Activated CD4-positive, alpha-beta T cell treated with anti-CD3 and anti-CD28 coated beads for 36 hours (primary cell): ENCODE measurements at regions of chr17 and their contacts with region 1.

Region 1: DNA sequence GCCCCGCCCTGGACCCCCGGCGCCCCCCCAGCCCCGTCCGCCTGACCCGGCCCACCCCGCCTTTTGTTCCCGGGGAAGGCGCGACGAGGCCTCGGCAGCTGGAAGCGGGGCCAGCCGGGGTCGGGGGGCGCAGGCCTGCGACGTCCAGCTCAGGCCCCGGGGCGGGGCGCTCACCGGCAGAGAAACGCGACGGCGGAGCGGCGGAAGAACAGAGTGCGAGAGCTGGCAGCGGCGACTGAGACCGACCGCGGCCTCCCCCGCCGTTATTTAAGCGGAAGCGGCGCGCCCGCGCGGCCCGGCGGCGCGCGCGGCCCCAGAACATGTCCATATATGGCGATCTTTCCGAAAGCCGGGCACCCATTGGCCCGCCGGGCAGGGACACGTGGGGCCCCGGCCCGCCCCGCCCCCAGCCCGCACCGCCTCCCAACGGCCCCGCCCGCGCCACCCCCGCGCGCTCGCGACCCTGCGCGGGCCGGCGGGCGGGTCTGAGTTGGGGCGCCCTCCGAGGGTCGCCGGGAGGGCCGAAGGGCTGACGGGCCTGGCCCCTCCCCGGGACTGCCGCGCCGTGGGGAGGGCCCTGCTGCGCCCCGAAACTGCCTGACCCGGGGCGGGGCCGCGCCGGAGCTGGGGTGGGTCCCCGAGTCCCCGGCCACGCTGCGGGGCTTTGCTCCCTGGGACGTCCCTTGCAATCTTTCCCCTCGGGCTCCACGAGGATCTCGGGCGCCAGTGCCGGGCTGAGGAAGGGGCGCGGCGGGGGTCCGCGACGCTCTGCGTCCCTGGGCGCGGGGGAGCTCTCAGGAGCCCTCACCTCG is at the start of gene ACTG1:
- DNase-seq: peak; percentile 95
- ATAC-seq: peak; percentile 61
- H3K4me3 Mint-ChIP-seq: peak within 1 kb of the TSS; percentile 97
- H3K27ac Mint-ChIP-seq: peak within 1 kb of the TSS; percentile 89
- H3K4me1 Mint-ChIP-seq: peaks cover 21% of the 10 kb centered on the region
- H3K27me3 Mint-ChIP-seq: no peaks in the 10 kb centered on the region
- total RNA-seq, gene ACTG1: 4,119 to 5,987 TPM

Region 2: GRCh38 chr17:81346090-81346907 is 166.5 kb before region 1 on chr17:
- CTCF ChIA-PET with region 1: no interaction called
- POLR2A ChIA-PET with region 1: no interaction called
- intact Hi-C with region 1: loop called in 1 of 2 experiments (anchors 1 kb)
- DNase-seq: peak; percentile 98
- ATAC-seq: peak; percentile 93
- H3K4me3 Mint-ChIP-seq: peak overlapping the region; percentile 26
- H3K27ac Mint-ChIP-seq: no peak overlapping the region
- H3K4me1 Mint-ChIP-seq: peaks cover 19% of the 10 kb centered on the region
- H3K27me3 Mint-ChIP-seq: peaks cover 25% of the 10 kb centered on the region

Region 3: GRCh38 chr17:81412490-81413093 is 100.2 kb before region 1 on chr17:
- CTCF ChIA-PET with region 1: no interaction called
- POLR2A ChIA-PET with region 1: no interaction called
- intact Hi-C with region 1: no loop called
- DNase-seq: peak; percentile 67
- ATAC-seq: peak; percentile 75
- H3K4me3 Mint-ChIP-seq: no peak overlapping the region
- H3K27ac Mint-ChIP-seq: no peak overlapping the region
- H3K4me1 Mint-ChIP-seq: peaks cover 7% of the 10 kb centered on the region
- H3K27me3 Mint-ChIP-seq: peaks cover 12% of the 10 kb centered on the region

Region 4: GRCh38 chr17:81484195-81484979 is 28.4 kb before region 1 on chr17:
- CTCF ChIA-PET with region 1: interaction called, 5 read pairs
- POLR2A ChIA-PET with region 1: interaction called, 11 read pairs
- intact Hi-C with region 1: loop called (anchors 1 to 2 kb)
- DNase-seq: peak; percentile 94
- ATAC-seq: peak; percentile 68
- H3K4me3 Mint-ChIP-seq: peak overlapping the region; percentile 30
- H3K27ac Mint-ChIP-seq: no peak overlapping the region
- H3K4me1 Mint-ChIP-seq: peaks cover 16% of the 10 kb centered on the region
- H3K27me3 Mint-ChIP-seq: peaks cover 26% of the 10 kb centered on the region

Region 5: DNA sequence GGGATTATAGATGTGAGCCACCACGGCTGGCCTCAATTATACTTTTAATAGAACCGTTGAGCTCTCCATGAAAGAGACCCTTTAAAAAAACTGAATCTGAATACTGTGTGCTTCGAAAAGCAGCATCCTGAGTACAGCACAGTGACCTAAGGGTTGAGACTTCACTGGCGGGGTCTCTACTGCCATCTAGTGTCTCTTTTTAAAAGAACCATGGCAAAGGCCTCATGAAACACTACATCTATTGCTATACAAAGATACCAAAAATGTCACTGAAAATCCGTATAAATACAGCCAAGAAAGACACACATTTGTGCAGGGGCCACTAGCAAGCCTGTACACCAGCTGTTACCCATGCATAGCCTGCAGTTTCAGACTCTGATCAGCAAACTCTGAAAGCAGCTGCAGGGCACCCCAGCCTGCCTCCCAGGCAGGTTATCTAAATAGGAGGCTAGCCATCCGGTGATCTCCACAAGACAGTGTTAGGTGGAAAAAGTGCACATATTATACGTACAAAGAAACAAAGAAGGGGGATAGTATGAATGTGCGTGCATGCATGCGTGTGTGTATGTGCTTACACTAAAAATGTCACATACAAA is 88.9 kb after region 1 on chr17:
- CTCF ChIA-PET with region 1: interaction called, 3 read pairs
- POLR2A ChIA-PET with region 1: no interaction called
- intact Hi-C with region 1: loop called in 1 of 2 experiments (anchors 2 kb)
- DNase-seq: peak; percentile 48
- ATAC-seq: peak; percentile 99
- H3K4me3 Mint-ChIP-seq: no peak overlapping the region
- H3K27ac Mint-ChIP-seq: no peak overlapping the region
- H3K4me1 Mint-ChIP-seq: no peaks in the 10 kb centered on the region
- H3K27me3 Mint-ChIP-seq: no peaks in the 10 kb centered on the region

Region 6: GRCh38 chr17:81666342-81667191 is 153.8 kb after region 1 on chr17 and contains the starts of genes CCDC137 and OXLD1:
- CTCF ChIA-PET with region 1: no interaction called
- POLR2A ChIA-PET with region 1: no interaction called
- intact Hi-C with region 1: loop called in 1 of 2 experiments (anchors 1 kb)
- DNase-seq: peak; percentile 97
- ATAC-seq: peak; percentile 91
- H3K4me3 Mint-ChIP-seq: peak within 1 kb of the TSS; percentile 91
- H3K27ac Mint-ChIP-seq: peak within 1 kb of the TSS; percentile 97
- H3K4me1 Mint-ChIP-seq: peaks cover 53% of the 10 kb centered on the region
- H3K27me3 Mint-ChIP-seq: no peaks in the 10 kb centered on the region
- total RNA-seq, gene CCDC137: 30.0 to 36.6 TPM
- total RNA-seq, gene OXLD1: 29.4 to 45.3 TPM

Region 7: DNA sequence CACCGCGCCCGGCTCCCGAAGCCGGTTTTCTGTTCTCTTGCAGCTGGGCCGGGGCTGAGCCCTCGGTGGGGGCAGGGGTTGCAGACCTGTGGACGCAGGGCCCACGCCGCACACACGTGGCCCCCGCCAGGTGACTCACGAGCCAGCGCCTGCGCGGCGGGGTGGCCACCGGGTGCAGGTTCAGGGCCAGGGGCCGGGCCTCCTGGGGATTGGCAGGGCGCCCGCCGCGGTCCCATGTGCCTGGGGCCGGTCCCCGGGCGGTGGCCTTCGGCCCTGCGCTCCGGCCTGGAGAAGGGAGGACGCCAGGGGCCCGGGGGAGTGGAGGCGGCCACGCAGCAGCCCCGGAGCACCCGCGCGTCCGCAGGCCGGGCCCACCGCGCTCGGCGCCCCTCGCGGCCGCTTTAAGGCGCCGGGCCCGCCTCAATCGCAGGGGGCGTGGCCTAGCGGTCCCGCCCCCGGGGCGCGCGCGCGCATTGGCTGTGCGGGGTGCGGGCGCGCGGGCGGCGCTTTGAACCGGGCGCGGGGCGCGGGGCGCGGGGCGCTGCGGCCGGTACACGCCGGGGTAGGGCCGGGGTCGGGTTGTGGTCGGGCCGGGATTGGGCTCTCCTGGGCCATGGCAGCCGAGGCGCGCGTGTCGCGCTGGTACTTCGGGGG is 199.2 kb after region 1 on chr17 and contains the start of gene SLC25A10:
- CTCF ChIA-PET with region 1: no interaction called
- POLR2A ChIA-PET with region 1: no interaction called
- intact Hi-C with region 1: loop called in 1 of 2 experiments (anchors 1 kb)
- DNase-seq: peak; percentile 93
- ATAC-seq: peak; percentile 87
- H3K4me3 Mint-ChIP-seq: peak within 1 kb of the TSS; percentile 89
- H3K27ac Mint-ChIP-seq: peak within 1 kb of the TSS; percentile 84
- H3K4me1 Mint-ChIP-seq: peaks cover 24% of the 10 kb centered on the region
- H3K27me3 Mint-ChIP-seq: no peaks in the 10 kb centered on the region
- total RNA-seq, gene SLC25A10: 28.6 to 31.8 TPM

Region 8: GRCh38 chr17:82283208-82283749 is 770.5 kb after region 1 on chr17:
- CTCF ChIA-PET with region 1: no interaction called
- POLR2A ChIA-PET with region 1: no interaction called
- intact Hi-C with region 1: no loop called
- DNase-seq: peak; percentile 87
- ATAC-seq: peak; percentile 93
- H3K4me3 Mint-ChIP-seq: no peak overlapping the region
- H3K27ac Mint-ChIP-seq: peak overlapping the region; percentile 77
- H3K4me1 Mint-ChIP-seq: peaks cover 43% of the 10 kb centered on the region
- H3K27me3 Mint-ChIP-seq: no peaks in the 10 kb centered on the region